Activated B cell treated with CpG ODN at 0.5 μM for 24 hours (primary cell): ENCODE measurements at regions of chr6 and their contacts with region 1.

Region 1: GRCh38 chr6:71258078-71258866 is 30.3 kb upstream of the OGFRL1 start:
- DNase-seq: no peak
- ATAC-seq: no peak
- H3K4me3 Mint-ChIP-seq: no peak overlapping the region
- H3K27ac Mint-ChIP-seq: no peak overlapping the region
- H3K4me1 Mint-ChIP-seq: peaks cover 14% of the 10 kb centered on the region
- H3K27me3 Mint-ChIP-seq: peaks cover 9% of the 10 kb centered on the region
- CTCF ChIP-seq: no peak

Region 2: DNA sequence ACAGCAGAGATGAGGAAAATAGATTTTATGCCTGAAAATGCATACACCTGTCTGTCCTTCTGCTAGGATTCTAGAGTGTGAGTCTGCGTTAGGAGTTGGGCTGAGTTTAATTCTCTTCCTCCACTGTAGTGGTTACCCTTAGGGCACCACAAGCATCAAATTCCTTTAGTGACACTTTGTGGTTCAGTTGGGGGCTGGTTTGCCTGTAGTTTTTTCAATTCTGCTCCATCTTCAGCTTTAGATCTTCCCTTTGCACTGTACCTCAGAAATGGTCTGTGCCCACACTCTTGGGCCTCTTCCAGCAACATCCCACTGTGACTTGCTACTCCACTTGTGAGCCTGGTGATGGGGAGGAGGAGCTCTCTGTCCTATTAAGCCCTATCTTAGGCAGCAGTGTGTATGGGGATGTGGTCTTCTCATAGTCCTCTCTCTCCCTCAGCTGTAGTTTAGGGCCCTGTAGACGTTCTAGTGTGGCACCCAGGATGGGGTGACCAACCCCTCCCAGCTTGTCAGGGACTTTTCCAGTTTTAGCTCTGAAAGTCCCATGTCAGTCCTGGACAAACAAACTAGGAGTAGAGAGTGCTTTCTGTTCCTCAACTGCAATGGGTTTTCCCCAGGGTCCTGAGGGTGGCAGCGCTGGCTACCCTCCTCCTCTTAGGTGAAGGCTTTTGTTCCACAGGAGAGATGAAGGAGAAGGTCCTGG is 10.6 kb after region 1 on chr6:
- CTCF ChIA-PET with region 1: no interaction called
- POLR2A ChIA-PET with region 1: interaction called, 3 read pairs
- intact Hi-C with region 1: loop called (anchors 1 kb)
- DNase-seq: no peak
- ATAC-seq: peak; percentile 70
- H3K4me3 Mint-ChIP-seq: peak overlapping the region; percentile 50
- H3K27ac Mint-ChIP-seq: peak overlapping the region; percentile 68
- H3K4me1 Mint-ChIP-seq: peaks cover 18% of the 10 kb centered on the region
- H3K27me3 Mint-ChIP-seq: no peaks in the 10 kb centered on the region
- CTCF ChIP-seq: no peak

Region 3: DNA sequence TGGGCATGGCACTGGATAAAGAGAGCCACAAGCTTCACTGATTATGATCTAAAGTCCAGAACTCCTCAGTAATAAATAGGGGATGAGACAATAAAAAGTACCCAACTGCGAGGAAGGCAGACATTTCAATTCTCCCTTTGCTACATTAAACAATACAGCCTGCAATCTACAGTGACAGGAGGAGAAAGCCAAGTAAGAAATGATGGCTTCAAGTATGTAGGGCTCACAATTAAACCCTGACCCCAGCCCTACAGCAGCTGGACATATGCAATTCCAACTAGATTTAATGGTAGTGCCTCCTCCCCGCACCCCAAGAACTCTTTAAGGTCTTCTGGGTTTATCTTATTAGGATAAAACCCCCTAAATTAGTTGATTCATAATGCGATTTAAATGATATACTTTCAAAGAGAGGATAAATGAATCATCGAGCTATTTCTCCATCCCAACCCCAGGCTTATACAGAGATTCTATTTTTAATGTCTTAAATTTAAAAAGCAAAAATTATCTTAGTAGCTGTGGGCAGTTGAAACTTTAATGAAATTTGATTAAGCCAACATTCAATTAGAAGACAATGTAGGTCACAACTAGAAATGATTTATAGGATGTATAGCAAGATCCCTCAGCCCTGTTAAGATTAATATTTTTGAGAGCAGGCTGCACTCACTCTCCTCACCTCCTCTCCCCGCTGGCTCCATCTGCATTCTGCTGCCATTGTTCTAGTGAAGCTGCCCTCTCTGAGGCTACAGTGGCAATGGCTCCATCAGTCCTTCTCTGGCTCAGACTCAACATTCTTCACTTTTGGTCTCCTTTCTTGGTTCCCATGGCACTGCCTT is 87.4 kb after region 1 on chr6:
- CTCF ChIA-PET with region 1: no interaction called
- POLR2A ChIA-PET with region 1: no interaction called
- intact Hi-C with region 1: no loop called
- DNase-seq: no peak
- ATAC-seq: no peak
- H3K4me3 Mint-ChIP-seq: no peak overlapping the region
- H3K27ac Mint-ChIP-seq: peak overlapping the region; percentile 24
- H3K4me1 Mint-ChIP-seq: peaks cover 16% of the 10 kb centered on the region
- H3K27me3 Mint-ChIP-seq: peaks cover 4% of the 10 kb centered on the region
- CTCF ChIP-seq: no peak